ENCODE measurements at regions of chr17 and their contacts with region 1.

Region 1: DNA sequence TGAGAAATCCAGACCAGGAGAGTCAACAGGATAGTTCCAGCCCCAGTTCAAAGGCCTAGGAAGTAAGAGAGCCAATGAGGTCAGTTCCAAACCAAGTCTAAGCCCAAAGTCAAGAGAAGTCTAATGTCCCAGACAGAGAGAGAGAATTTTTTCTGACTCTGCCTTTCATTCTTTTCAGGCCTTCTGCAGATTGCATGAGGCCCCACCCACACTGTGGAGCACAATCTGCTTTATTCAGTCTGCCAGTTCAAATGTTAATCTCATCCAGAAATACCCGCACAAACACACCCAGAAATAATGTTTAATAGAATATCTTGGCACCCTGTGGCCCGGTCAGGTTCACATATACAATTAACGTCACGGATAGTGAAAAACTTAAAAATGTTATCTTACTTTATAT is 962.4 kb upstream of the SOX9 start:
- DNase-seq: no peak
- ATAC-seq: no peak
- H3K4me3 ChIP-seq: no peak overlapping the region
- H3K27ac ChIP-seq: no peak overlapping the region
- H3K4me1 ChIP-seq: no peaks in the 10 kb centered on the region
- H3K27me3 ChIP-seq: no peaks in the 10 kb centered on the region
- CTCF ChIP-seq: no peak
- POLR2A ChIP-seq: no peak
- RAD21 ChIP-seq: no peak

Region 2: DNA sequence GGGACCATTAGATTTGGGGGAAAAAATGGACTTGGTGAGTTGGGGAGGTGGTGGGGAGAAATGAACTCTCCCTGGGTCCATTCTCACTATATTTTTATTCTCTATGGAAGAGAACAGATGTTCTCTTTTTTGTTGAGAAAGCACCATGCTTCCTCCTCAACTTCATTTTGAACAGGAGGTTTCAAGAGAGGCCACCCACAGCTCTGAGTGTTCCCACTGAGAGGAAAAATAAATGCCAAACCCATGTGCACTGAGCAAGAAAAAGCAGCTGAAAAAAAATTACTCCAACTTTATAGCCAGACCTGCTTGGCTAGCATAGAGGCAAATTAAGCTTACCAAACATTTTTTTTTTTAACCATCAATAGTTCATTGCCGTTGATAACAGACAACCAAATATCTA is 105.5 kb before region 1 on chr17:
- CTCF ChIA-PET with region 1: no interaction called
- POLR2A ChIA-PET with region 1: no interaction called
- dilution Hi-C with region 1: no loop called
- in situ Hi-C with region 1: no loop called
- intact Hi-C with region 1: loop called (anchors 5 kb)
- DNase-seq: no peak
- ATAC-seq: no peak
- H3K4me3 ChIP-seq: no peak overlapping the region
- H3K27ac ChIP-seq: no peak overlapping the region
- H3K4me1 ChIP-seq: no peaks in the 10 kb centered on the region
- H3K27me3 ChIP-seq: no peaks in the 10 kb centered on the region
- CTCF ChIP-seq: no peak
- POLR2A ChIP-seq: no peak
- RAD21 ChIP-seq: no peak

Region 3: DNA sequence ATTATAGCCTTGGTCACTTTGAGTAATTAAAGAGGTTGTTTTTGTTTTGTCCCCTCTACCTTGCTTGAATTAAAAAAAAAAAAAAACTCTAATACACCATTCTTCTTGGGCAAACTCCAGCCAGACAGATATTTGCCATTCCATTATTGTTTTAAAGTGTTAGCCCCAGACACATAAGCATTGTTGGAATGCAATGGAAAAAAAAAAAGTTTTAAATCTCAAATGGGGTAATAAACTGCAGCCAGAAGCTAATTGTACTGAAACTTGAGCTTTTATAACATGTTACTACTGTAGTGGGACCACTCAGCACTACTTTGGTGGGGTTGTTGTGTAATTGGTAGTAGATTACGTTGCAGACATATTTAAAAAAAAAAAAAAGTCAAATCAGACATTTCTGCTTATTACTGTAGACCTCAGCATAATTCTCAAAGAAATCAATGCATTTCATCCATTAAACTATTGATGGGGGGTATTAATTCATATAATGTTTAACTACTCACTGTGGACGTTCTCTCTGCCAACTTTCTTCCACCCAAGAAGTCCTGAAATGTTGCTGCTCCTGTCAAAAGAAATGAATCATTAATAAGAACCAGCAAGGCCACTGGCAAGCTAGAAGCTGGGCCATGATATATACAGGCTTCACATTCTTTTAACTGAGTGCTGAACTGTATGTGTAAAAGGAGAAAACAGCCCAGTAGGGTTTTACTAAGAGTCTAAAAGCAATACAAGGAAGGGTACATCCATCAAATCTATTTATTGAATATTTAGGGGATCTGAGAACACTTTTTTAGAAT is 335.8 kb after region 1 on chr17:
- CTCF ChIA-PET with region 1: no interaction called
- POLR2A ChIA-PET with region 1: no interaction called
- dilution Hi-C with region 1: no loop called
- in situ Hi-C with region 1: no loop called
- intact Hi-C with region 1: no loop called
- DNase-seq: peak; percentile 28
- ATAC-seq: peak; percentile 73
- H3K4me3 ChIP-seq: no peak overlapping the region
- H3K27ac ChIP-seq: no peak overlapping the region
- H3K4me1 ChIP-seq: peaks cover 2% of the 10 kb centered on the region; the same call in 1 of the 2 replicates
- H3K27me3 ChIP-seq: no peaks in the 10 kb centered on the region
- CTCF ChIP-seq: no peak
- POLR2A ChIP-seq: no peak
- RAD21 ChIP-seq: no peak